GM12878 (cell line): ENCODE measurements at regions of chr3 and their contacts with region 1.

Region 1: DNA sequence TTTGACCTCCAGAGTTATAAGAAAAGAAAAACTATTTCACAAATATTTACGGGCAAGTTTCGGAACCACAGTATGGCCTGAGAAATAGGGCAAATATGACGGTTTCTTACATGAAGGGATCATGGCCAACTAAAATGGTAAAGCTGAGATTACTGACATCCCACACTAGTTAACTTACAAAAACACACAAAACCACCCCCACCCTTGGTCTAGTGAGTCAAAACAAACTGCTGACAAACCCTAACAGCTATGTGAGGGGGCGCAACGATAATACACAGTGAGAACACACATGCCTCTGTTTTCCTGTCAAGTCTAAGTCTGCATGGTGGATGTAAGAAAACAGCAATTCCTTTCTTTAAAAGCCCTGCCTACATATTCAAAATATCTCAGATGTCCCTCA is 32.3 kb downstream of the CBLB start:
- DNase-seq: peak; percentile 68
- ATAC-seq: peak; percentile 81
- H3K4me3 ChIP-seq: peak overlapping the region; percentile 33; the same call in 1 of the 2 replicates
- H3K27ac ChIP-seq: peak overlapping the region; percentile 86
- H3K4me1 ChIP-seq: peaks cover 27% of the 10 kb centered on the region
- H3K27me3 ChIP-seq: no peaks in the 10 kb centered on the region
- CTCF ChIP-seq: 0 out of 6 replicates have a peak, but pooled peaks of 1 of the 3 experiments have one; percentile 5
- EP300 ChIP-seq: peak; percentile 80 to 86; a peak in 3 of 4 replicates
- POLR2A ChIP-seq: peak; percentile 31; the same call in 1 of the 2 replicates
- RAD21 ChIP-seq: peak; percentile 27

Region 2: DNA sequence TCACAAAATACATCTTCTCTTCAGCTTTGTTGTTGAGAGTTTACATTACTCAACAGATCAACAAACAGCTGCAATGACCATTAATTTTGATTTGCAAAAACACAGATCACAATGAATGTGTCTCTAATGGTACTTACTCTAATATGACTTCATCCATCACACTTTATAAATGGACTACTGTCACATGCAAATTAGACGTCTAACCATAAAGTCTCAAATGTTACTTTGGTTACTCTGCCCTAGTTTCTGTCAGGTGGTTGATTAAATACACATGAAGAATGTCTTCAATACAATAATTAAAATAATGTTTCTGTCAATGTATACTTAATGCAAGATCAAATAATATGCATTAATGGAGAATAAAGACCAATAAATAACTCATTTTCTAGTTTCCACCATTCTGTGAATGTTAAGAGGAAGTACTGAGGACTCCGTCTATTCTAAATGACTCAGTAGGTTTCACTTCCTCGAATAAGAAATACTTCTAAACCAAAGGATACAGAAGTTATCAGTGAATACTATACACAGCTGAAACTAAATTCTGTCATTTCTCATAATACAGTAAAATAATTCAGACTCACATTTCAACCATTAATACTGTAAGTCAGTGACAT is 113.5 kb before region 1 on chr3:
- CTCF ChIA-PET with region 1: no interaction called
- POLR2A ChIA-PET with region 1: no interaction called
- RAD21 ChIA-PET with region 1: interaction called, 6 read pairs
- SMC1A ChIA-PET with region 1: interaction called, 8 read pairs
- in situ Hi-C with region 1: no loop called
- intact Hi-C with region 1: loop called (anchors 2 kb)
- DNase-seq: peak; percentile 36
- ATAC-seq: peak; percentile 98
- H3K4me3 ChIP-seq: no peak overlapping the region
- H3K27ac ChIP-seq: no peak overlapping the region
- H3K4me1 ChIP-seq: peaks cover 7% of the 10 kb centered on the region; the same call in 1 of the 2 replicates
- H3K27me3 ChIP-seq: no peaks in the 10 kb centered on the region
- CTCF ChIP-seq: no peak
- EP300 ChIP-seq: peak; percentile 92 to 98
- POLR2A ChIP-seq: no peak
- RAD21 ChIP-seq: no peak

Region 3: GRCh38 chr3:105806361-105806760 is 30.2 kb before region 1 on chr3:
- CTCF ChIA-PET with region 1: interaction called, 12 read pairs
- POLR2A ChIA-PET with region 1: interaction called, 18 read pairs
- RAD21 ChIA-PET with region 1: interaction called, 62 read pairs
- SMC1A ChIA-PET with region 1: interaction called, 86 read pairs
- in situ Hi-C with region 1: no loop called
- intact Hi-C with region 1: loop called (anchors 2 kb)
- DNase-seq: no peak
- ATAC-seq: peak; percentile 64
- H3K4me3 ChIP-seq: no peak overlapping the region
- H3K27ac ChIP-seq: no peak overlapping the region
- H3K4me1 ChIP-seq: peaks cover 18% of the 10 kb centered on the region
- H3K27me3 ChIP-seq: no peaks in the 10 kb centered on the region
- CTCF ChIP-seq: no peak
- EP300 ChIP-seq: peak in 1 of 2 experiments; percentile 39; a peak in 2 of 4 replicates
- POLR2A ChIP-seq: no peak
- RAD21 ChIP-seq: no peak

Region 4: DNA sequence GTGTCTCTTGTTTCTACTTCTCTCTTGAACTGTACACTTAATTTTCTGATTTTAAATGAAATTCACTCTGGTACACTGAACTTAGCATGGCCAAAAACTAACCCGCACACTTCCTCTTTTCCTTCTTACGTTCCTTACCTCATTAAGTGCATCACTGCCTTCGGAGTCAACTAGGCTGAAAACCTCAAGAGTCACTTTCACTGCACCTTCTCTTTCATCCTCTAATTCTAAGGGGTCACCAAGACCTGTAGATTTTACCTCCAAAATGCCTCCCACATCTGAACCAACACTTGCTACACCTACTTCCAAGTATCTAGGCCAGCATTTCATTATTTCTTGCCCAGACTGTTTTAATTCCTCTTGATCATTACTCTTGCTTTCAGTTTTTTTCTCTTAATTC is 25.7 kb after region 1 on chr3:
- CTCF ChIA-PET with region 1: interaction called, 11 read pairs
- POLR2A ChIA-PET with region 1: interaction called, 7 read pairs
- RAD21 ChIA-PET with region 1: interaction called, 119 read pairs
- SMC1A ChIA-PET with region 1: interaction called, 101 read pairs
- in situ Hi-C with region 1: no loop called
- intact Hi-C with region 1: loop called (anchors 1 kb)
- DNase-seq: peak; percentile 69
- ATAC-seq: peak; percentile 80
- H3K4me3 ChIP-seq: peak overlapping the region; percentile 39
- H3K27ac ChIP-seq: peak overlapping the region; percentile 55
- H3K4me1 ChIP-seq: peaks cover 17% of the 10 kb centered on the region
- H3K27me3 ChIP-seq: no peaks in the 10 kb centered on the region
- CTCF ChIP-seq: no peak
- EP300 ChIP-seq: peak; percentile 79 to 90
- POLR2A ChIP-seq: no peak
- RAD21 ChIP-seq: peak; percentile 32; the same call in 1 of the 2 replicates

Region 5: DNA sequence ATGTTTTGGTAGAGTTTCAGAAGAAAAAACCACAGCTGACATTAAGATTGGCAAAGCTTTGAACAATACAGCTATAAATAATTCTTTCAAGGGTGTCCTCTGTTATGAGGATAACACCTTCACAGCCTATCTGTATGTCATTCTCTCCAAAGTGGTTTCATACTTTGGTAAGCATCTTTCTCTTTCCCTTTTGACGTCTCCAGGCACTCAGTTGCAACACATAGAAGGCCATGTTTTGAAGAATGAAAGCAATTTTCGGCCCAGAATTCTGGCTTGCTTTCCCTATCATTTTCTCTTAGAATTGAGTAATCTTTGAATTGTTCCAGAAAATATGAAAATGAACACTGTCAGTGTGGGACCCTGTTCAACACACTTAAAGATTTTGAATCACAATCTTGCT is 232.3 kb after region 1 on chr3:
- CTCF ChIA-PET with region 1: interaction called, 3 read pairs
- POLR2A ChIA-PET with region 1: interaction called, 5 read pairs
- RAD21 ChIA-PET with region 1: interaction called, 28 read pairs
- SMC1A ChIA-PET with region 1: interaction called, 20 read pairs
- in situ Hi-C with region 1: no loop called
- intact Hi-C with region 1: no loop called
- DNase-seq: no peak
- ATAC-seq: peak; percentile 91
- H3K4me3 ChIP-seq: no peak overlapping the region
- H3K27ac ChIP-seq: peak overlapping the region; percentile 20; the same call in 1 of the 2 replicates
- H3K4me1 ChIP-seq: no peaks in the 10 kb centered on the region
- H3K27me3 ChIP-seq: no peaks in the 10 kb centered on the region
- CTCF ChIP-seq: no peak
- EP300 ChIP-seq: no peak; a peak in 1 of 4 replicates
- POLR2A ChIP-seq: no peak
- RAD21 ChIP-seq: no peak

Region 6: DNA sequence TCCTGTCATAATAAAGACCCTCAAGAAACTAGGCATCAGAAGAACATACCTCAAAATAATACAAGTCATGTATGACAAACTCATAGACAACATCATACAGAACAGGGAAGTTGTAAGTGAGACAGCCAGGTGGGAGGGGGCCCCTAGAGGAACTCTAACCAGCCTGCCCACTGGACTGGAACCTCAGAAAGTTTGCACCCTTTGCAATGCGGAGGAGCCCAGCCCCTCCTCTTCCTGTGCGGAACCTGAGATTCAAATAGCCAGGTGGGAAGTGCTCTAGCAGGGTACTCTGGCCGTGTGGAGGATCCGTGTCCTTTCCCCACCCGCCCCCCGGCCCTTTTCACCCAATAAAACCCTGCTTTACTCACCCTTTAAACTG is 419.3 kb after region 1 on chr3:
- CTCF ChIA-PET with region 1: interaction called, 5 read pairs
- POLR2A ChIA-PET with region 1: interaction called, 3 read pairs
- RAD21 ChIA-PET with region 1: interaction called, 48 read pairs
- SMC1A ChIA-PET with region 1: interaction called, 17 read pairs
- in situ Hi-C with region 1: no loop called
- intact Hi-C with region 1: loop called (anchors 10 kb)
- DNase-seq: peak; percentile 93
- ATAC-seq: peak; percentile 88
- H3K4me3 ChIP-seq: peak overlapping the region; percentile 83
- H3K27ac ChIP-seq: peak overlapping the region; percentile 99
- H3K4me1 ChIP-seq: no peaks in the 10 kb centered on the region
- H3K27me3 ChIP-seq: no peaks in the 10 kb centered on the region
- CTCF ChIP-seq: no peak
- EP300 ChIP-seq: peak in 1 of 2 experiments; percentile 82; a peak in 2 of 4 replicates
- POLR2A ChIP-seq: peak; percentile 71
- RAD21 ChIP-seq: peak; percentile 7; the same call in 1 of the 2 replicates